Common myeloid progenitor, CD34-positive (primary cell): ENCODE measurements at regions of chr20 and their contacts with region 1.

Region 1: GRCh38 chr20:41095110-41095969 is 42.0 kb upstream of the PLCG1 start:
- DNase-seq: peak; percentile 62 to 79 (median 74)
- H3K4me3 ChIP-seq: no peak overlapping the region
- H3K27ac ChIP-seq: no peak overlapping the region
- H3K4me1 ChIP-seq: no peaks in the 10 kb centered on the region
- H3K27me3 ChIP-seq: no peaks in the 10 kb centered on the region

Region 2: GRCh38 chr20:40962730-40963504 is 132.4 kb before region 1 on chr20:
- CTCF ChIA-PET with region 1: interaction called, 165 read pairs
- POLR2A ChIA-PET with region 1: no interaction called
- DNase-seq: peak; percentile 58 to 80 (median 72)
- H3K4me3 ChIP-seq: peak overlapping the region in 1 of 7 experiments; percentile 14
- H3K27ac ChIP-seq: no peak overlapping the region
- H3K4me1 ChIP-seq: peaks cover 0 to 15% (median 8%) of the 10 kb centered on the region in 4 experiments
- H3K27me3 ChIP-seq: no peaks in the 10 kb centered on the region

Region 3: DNA sequence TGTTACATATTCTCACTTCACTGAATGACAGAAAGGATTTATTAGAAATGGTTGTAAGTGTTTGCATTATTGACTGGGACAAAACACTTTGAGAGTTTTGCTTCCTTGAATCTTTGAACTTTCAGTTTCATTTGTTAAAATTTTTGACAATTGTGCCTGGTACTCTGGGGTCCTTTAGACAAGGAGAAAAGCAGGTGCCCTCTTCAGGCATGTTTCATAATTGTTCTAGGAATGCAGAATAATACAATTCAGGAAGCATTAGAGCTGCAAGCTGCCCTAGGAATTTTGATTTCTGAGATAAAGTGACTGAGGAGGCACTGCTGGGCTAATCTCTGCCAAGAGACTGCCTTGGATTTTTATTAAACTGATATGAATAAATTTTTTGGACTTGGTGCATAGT is 17.0 kb before region 1 on chr20:
- CTCF ChIA-PET with region 1: interaction called, 11 read pairs
- POLR2A ChIA-PET with region 1: no interaction called
- DNase-seq: peak; percentile 58 to 68 (median 65)
- H3K4me3 ChIP-seq: peak overlapping the region in 2 of 7 experiments; percentile 46 to 52
- H3K27ac ChIP-seq: no peak overlapping the region
- H3K4me1 ChIP-seq: peaks cover 11 to 75% (median 29%) of the 10 kb centered on the region in 4 experiments
- H3K27me3 ChIP-seq: no peaks in the 10 kb centered on the region

Region 4: GRCh38 chr20:41178904-41179432 is 83.6 kb after region 1 on chr20:
- CTCF ChIA-PET with region 1: no interaction called
- POLR2A ChIA-PET with region 1: no interaction called
- DNase-seq: no peak
- H3K4me3 ChIP-seq: no peak overlapping the region
- H3K27ac ChIP-seq: no peak overlapping the region
- H3K4me1 ChIP-seq: no peaks in the 10 kb centered on the region
- H3K27me3 ChIP-seq: peaks cover 0 to 61% (median 18%) of the 10 kb centered on the region in 5 experiments